Activated CD4-positive, alpha-beta T cell treated with anti-CD3 and anti-CD28 coated beads, Interleukin-2, amount 10 ng/mL, durations not matched to agents 7 days and 5 days (primary cell): ENCODE measurements at regions of chr10 and their contacts with region 1.

Region 1: GRCh38 chr10:102420810-102421644 is at the start of gene FBXL15:
- DNase-seq: peak; percentile 97
- H3K4me3 Mint-ChIP-seq: peak within 1 kb of the TSS; percentile 90
- H3K27ac Mint-ChIP-seq: peak within 1 kb of the TSS; percentile 95
- H3K4me1 Mint-ChIP-seq: peaks cover 37% of the 10 kb centered on the region
- H3K27me3 Mint-ChIP-seq: peaks cover 18% of the 10 kb centered on the region
- total RNA-seq, gene FBXL15: 8.7 to 11.2 TPM

Region 2: DNA sequence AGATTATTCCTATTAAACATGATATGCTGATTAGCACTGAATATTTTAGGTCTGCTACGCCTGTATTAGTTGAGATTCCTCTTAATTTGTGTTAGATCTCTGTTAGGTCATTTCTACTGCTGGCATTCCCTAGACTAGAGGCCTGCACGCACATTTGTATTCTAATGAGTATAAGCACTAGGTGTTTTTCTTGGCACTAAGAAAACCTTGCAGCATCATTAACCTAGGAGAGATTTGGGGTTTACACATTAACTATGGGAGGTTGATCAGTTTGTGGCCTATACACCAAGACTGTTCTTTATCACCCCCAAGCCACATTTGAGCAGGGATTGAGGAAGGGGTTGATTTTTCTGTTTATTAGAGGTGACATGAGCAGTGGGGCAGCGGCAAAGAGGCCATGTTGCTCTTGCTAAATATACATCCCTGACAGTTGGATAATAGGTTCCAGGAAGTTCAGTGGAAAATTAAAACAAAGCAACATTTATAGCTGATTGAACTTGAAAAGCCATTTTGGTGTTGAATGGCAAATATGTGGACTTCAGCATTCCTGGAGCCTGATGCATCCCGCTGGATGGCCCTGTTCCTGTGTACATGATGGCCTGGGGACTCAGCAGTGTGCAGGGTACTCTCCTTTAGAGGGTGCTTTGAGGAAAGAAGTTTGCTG is 110.5 kb before region 1 on chr10:
- CTCF ChIA-PET with region 1: no interaction called
- POLR2A ChIA-PET with region 1: no interaction called
- DNase-seq: no peak
- H3K4me3 Mint-ChIP-seq: no peak overlapping the region
- H3K27ac Mint-ChIP-seq: no peak overlapping the region
- H3K4me1 Mint-ChIP-seq: peaks cover 28% of the 10 kb centered on the region
- H3K27me3 Mint-ChIP-seq: no peaks in the 10 kb centered on the region

Region 3: GRCh38 chr10:102399217-102400089 is 21.6 kb before region 1 on chr10:
- CTCF ChIA-PET with region 1: interaction called, 31 read pairs
- POLR2A ChIA-PET with region 1: no interaction called
- DNase-seq: peak; percentile 88
- H3K4me3 Mint-ChIP-seq: peak overlapping the region; percentile 62
- H3K27ac Mint-ChIP-seq: peak overlapping the region; percentile 76
- H3K4me1 Mint-ChIP-seq: peaks cover 43% of the 10 kb centered on the region
- H3K27me3 Mint-ChIP-seq: no peaks in the 10 kb centered on the region

Region 4: GRCh38 chr10:102408728-102409603 is 12.1 kb before region 1 on chr10:
- CTCF ChIA-PET with region 1: interaction called, 33 read pairs
- POLR2A ChIA-PET with region 1: no interaction called
- DNase-seq: peak; percentile 51
- H3K4me3 Mint-ChIP-seq: peak overlapping the region; percentile 44
- H3K27ac Mint-ChIP-seq: no peak overlapping the region
- H3K4me1 Mint-ChIP-seq: peaks cover 31% of the 10 kb centered on the region
- H3K27me3 Mint-ChIP-seq: peaks cover 24% of the 10 kb centered on the region

Region 5: DNA sequence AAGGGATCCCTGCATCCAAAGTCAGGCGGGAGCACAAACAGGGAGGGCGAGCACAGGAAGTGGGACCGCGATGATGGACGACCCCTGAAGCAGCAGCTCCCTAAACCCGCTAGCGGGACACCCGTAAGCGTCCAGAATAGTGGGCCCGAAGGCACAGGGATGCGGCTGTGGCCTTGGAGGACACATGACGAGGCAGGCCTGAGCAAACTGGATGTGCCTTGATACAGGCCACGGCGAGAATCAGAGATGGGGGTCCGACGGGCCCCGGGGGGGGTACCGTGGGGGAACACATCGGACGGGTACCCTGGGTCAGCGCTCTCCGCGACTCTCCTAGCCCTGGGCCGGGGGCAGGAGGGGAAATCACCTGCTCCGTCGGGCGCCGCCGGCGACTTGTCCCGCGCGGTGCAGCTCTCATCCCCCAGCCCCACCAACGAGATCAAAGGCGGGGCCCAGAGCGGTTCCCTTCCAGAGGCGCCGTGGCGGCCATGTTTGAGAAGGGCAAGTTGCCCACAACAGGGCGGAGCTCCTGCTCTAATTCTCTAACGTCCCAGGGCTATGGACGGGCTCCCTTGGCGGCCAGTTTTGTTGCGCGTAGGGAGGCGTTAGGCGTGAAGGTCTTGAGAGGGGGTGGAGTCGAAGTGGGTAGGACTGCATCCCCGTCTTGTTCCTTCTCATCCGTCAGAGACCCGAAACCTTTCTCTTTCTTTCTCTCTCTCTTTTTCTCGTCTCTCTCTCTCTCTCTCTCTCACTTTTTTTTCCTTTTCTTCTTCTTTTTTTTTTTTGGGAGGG is 11.3 kb after region 1 on chr10 and contains the start of gene CUEDC2:
- CTCF ChIA-PET with region 1: interaction called, 32 read pairs
- POLR2A ChIA-PET with region 1: interaction called, 4 read pairs
- DNase-seq: peak; percentile 97
- H3K4me3 Mint-ChIP-seq: peak within 1 kb of the TSS; percentile 94
- H3K27ac Mint-ChIP-seq: peak within 1 kb of the TSS; percentile 95
- H3K4me1 Mint-ChIP-seq: peaks cover 49% of the 10 kb centered on the region
- H3K27me3 Mint-ChIP-seq: no peaks in the 10 kb centered on the region
- total RNA-seq, gene CUEDC2: 63.6 to 68.9 TPM

Region 6: DNA sequence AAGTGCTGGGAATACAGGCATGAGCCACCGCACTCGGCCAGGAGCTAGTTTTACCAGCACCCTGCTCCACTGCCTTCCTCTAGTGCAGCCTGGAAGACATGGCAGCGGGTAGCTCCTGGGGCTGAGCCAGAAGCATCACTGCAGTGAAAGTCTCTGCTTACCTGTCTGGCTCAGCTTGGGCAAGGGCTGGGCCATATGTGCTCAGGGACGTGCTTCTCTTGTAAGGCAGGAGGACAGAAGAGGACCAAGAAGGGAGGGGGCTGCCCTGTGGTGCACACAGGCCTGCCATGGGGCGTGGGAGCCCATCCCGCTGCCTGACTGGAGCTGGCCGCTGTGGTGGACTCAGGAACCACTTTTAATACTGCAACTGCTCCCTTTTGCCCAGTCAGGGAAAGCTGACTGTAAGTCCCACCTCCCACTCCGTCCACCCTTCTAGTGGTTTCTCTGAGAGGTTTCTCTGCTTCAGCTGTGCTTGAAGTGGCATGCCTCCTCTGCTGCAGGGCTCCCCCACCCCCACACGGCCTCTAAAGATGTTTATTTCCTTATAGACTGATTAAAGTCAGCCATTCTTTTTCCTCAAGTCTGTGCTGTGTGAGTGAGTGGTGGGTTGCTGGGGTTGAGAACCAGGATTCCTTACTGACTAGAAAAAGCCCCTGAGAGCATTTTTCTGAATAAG is 55.6 kb after region 1 on chr10:
- CTCF ChIA-PET with region 1: interaction called, 13 read pairs
- POLR2A ChIA-PET with region 1: no interaction called
- DNase-seq: no peak
- H3K4me3 Mint-ChIP-seq: no peak overlapping the region
- H3K27ac Mint-ChIP-seq: peak overlapping the region; percentile 69
- H3K4me1 Mint-ChIP-seq: peaks cover 24% of the 10 kb centered on the region
- H3K27me3 Mint-ChIP-seq: no peaks in the 10 kb centered on the region